ENCODE measurements at regions of chr5 and their contacts with region 1.

Region 1: GRCh38 chr5:73917433-73917832 is 291.4 kb downstream of the ARHGEF28 start:
- DNase-seq: no peak
- H3K4me3 ChIP-seq: no peak overlapping the region
- H3K27ac ChIP-seq: no peak overlapping the region
- H3K4me1 ChIP-seq: no peaks in the 10 kb centered on the region
- H3K27me3 ChIP-seq: no peaks in the 10 kb centered on the region
- CTCF ChIP-seq: no peak

Region 2: DNA sequence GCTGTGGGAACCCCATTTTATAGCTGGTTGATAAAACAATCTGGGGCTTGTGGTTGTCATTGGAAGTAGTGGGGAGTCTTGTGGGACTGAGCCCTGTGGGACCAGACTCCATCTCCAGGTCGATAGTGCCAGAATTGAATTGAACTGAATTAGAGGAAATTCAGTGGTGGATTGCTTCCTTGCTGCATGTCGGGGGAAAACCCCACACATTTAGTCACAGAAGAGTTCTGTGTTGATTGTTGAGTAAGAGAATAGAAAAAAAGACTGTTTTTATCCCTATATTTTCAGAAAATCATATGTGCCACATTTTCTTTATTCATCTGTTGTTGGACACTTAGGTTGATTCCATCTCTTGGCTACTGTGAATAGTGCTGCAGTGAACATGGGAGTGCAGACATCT is 81.7 kb before region 1 on chr5:
- CTCF ChIA-PET with region 1: interaction called, 14 read pairs
- dilution Hi-C with region 1: no loop called
- in situ Hi-C with region 1: no loop called
- intact Hi-C with region 1: no loop called
- DNase-seq: no peak
- H3K4me3 ChIP-seq: no peak overlapping the region
- H3K27ac ChIP-seq: no peak overlapping the region
- H3K4me1 ChIP-seq: peaks cover 8% of the 10 kb centered on the region
- H3K27me3 ChIP-seq: no peaks in the 10 kb centered on the region
- CTCF ChIP-seq: no peak

Region 3: DNA sequence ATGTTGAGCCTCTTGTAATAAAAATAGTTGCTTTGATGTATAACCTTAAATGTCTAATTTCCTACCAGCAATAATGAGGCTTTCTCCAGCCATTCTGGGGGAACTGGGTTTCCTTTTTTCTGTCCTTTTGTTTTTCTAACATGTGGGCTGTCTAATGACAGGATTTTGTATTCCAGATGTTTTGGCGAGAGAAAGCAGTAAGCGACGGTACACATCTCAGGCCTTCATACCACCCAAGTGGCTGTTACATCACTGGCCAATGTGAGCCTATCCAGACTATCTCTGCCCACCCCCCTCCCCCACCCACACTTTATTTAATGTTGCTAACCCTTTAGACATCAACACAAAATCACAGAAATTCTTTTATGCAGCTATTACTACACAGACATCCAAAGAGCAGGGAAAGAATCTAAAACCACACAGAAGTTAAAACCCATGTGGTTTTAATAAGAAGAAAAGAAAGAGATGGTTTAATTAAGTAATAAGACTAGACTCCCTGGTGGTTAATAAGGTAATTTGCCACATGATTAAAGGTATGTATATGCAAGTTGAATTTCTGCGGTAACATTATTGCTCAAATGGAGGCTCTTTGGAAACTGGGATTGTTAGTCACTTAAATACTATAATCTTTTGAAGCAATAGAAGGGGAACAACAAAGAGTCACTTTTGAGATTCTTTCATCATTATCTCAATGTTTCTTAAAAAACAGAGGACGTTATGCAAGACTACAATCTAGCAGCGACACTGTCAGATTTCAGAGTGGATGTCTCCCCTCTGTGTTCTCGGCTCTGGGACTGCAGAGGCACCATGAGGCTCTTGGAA is 357.9 kb after region 1 on chr5:
- CTCF ChIA-PET with region 1: no interaction called
- dilution Hi-C with region 1: no loop called
- in situ Hi-C with region 1: no loop called
- intact Hi-C with region 1: no loop called
- DNase-seq: no peak
- H3K4me3 ChIP-seq: no peak overlapping the region
- H3K27ac ChIP-seq: no peak overlapping the region
- H3K4me1 ChIP-seq: peaks cover 12% of the 10 kb centered on the region
- H3K27me3 ChIP-seq: no peaks in the 10 kb centered on the region
- CTCF ChIP-seq: no peak

Region 4: GRCh38 chr5:74452856-74453255 is 535.4 kb after region 1 on chr5:
- CTCF ChIA-PET with region 1: no interaction called
- dilution Hi-C with region 1: no loop called
- in situ Hi-C with region 1: no loop called
- intact Hi-C with region 1: no loop called
- DNase-seq: no peak
- H3K4me3 ChIP-seq: no peak overlapping the region
- H3K27ac ChIP-seq: no peak overlapping the region
- H3K4me1 ChIP-seq: no peaks in the 10 kb centered on the region
- H3K27me3 ChIP-seq: no peaks in the 10 kb centered on the region
- CTCF ChIP-seq: no peak

Region 5: DNA sequence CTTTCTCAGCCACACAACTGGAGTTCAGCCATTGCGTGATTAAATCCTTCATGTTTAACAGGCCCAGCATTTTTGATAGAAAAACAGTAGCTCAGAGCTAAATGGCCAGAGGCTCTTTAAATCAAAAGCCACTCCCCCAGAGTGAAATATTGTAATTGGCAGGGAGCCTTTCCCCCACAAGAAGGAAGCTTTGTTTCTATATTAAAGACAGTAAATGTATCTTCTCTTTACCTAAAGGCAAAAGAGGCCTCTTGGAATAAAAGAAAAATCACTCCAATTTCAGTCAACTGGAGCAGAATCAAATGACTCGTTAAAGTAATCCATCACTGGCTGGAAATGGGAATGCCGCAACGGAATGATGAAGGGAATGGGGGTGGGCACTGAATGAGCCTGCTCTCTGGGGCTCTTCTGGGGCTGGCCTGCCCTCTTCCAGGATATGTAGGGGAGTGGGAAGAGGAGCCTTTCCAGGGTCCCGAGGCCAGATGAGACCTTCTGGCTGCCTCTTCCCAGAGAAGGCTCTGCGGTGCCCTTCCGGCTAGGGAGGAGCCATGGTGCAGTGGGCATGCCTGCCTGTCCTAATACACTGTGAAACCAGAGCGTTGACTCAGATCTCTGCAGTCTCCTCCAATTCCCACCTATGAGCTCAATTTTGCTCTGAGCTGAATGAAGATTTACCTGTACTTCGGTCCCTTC is 1739.0 kb after region 1 on chr5:
- CTCF ChIA-PET with region 1: no interaction called
- dilution Hi-C with region 1: no loop called
- in situ Hi-C with region 1: no loop called
- intact Hi-C with region 1: no loop called
- DNase-seq: peak; percentile 60
- H3K4me3 ChIP-seq: peak overlapping the region; percentile 57 to 66 (median 63)
- H3K27ac ChIP-seq: peak overlapping the region; percentile 64
- H3K4me1 ChIP-seq: peaks cover 8% of the 10 kb centered on the region
- H3K27me3 ChIP-seq: no peaks in the 10 kb centered on the region
- CTCF ChIP-seq: no peak